ENCODE measurements at regions of chr18 and their contacts with region 1.

Region 1: DNA sequence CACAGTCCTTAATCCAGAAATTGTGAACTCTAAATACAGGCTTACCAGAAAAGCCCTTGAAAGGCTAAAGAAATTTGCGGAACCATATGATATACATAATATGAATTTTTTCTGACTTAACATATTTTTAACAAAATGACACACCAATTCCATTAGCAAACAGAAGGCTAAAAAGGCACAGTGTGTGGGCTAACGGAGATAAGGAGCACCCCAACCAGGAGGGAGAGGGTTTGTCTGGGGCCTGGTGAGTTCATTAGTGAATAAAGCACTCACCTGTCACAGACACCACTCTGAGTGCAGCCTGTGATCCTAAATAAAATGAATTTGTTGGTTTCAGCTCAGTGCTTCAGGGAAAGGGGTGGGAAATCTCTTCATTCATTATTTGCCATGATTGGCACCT is 2.7 kb upstream of the FECH start:
- H3K4me3 ChIP-seq: no peak overlapping the region
- H3K27ac ChIP-seq: no peak overlapping the region
- H3K4me1 ChIP-seq: peaks cover 7% of the 10 kb centered on the region
- CTCF ChIP-seq: no peak

Region 2: DNA sequence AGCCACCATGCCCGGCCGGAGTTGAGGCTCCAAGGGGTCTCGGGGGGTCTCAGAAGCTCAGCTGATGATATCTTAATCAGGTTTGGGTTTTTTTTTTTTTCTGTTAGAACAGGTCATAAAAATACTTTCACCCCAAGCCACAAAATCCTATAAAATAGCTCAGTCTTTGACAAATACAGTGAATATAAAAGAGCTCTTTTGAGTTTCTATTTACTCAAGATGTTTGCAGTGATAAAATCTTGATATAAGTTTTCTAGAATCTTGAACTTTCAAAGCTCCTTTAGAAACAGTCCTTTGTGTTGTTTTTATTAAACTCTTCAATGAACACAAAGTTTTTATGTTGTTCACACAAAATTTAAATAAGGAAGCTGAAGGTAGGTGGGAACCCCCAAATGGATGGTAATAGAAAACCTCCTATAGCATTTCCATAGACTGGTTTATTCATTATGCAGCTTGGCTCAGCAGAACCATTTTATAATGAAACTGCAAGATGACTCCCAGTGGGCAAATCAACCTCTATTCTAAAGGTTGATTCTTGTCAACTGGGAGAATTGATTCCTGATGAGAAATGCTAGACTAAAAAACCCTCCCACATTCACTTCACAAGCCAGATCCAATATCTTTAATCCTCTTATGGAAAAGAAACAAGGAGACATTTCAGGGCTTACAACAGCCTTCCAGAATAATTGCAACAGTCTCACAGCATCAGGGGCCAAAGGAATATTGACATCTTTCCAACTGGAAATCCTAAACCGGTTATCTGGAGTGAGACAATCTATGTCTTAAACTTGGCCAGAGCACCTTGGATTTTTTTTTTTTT is 46.1 kb after region 1 on chr18:
- CTCF ChIA-PET with region 1: interaction called, 11 read pairs
- POLR2A ChIA-PET with region 1: no interaction called
- H3K4me3 ChIP-seq: no peak overlapping the region
- H3K27ac ChIP-seq: peak overlapping the region; percentile 56; the same call in 1 of the 2 replicates
- H3K4me1 ChIP-seq: peaks cover 5% of the 10 kb centered on the region
- CTCF ChIP-seq: no peak

Region 3: DNA sequence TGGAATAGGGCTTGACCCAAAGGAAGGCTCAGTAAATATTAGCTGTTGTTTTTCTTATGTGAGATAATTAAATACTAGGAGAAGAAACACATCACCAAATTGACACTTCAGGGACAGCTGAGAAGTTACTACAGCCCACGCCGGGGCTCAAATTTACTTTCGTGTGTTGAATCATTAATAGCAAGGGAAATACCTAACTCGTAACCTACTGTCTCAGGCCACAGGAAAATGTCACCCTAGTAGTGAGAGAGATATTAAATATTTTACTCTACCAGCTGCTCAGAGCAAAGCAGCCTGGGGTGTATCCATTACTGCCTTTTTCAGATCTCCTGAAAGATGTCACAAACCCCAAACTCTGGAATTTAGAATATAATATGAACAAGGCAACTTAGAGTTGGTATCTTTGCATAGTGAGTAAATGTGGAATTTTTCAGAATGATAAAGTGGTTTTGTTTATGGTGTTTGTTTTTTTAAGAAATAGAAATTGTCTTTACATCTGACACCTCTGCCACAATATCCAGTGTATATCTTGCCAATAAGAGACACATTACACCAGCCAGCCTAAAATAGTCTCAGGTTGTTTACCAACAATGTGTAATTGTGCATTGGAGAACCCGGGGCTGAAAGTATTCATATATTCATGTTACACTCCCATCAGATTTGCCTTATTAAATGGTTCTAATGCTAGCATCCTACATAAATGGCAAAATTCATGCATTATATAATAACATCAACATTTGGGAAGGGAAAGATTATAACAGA is 165.6 kb after region 1 on chr18:
- CTCF ChIA-PET with region 1: no interaction called
- POLR2A ChIA-PET with region 1: no interaction called
- H3K4me3 ChIP-seq: no peak overlapping the region
- H3K27ac ChIP-seq: no peak overlapping the region
- H3K4me1 ChIP-seq: peaks cover 8% of the 10 kb centered on the region; the same call in 1 of the 2 replicates
- CTCF ChIP-seq: no peak

Measured in HEK293 (cell line).